ENCODE measurements at regions of chr12 and their contacts with region 1.

Region 1: GRCh38 chr12:64059685-64060084 is 162.4 kb downstream of the KICS2 start:
- DNase-seq: peak in 1 of 10 donors; percentile 25
- H3K4me3 ChIP-seq: peak overlapping the region in 28 of 59 donors; percentile 0 to 40 (median 19)
- H3K27ac ChIP-seq: peak overlapping the region in 54 of 59 donors; percentile 9 to 86 (median 75)
- H3K27me3 ChIP-seq: no peaks in the 10 kb centered on the region
- CTCF ChIP-seq: peak in 39 of 56 donors; percentile 9 to 64 (median 33)

Region 2: GRCh38 chr12:63940310-63941005 is 119.2 kb before region 1 on chr12:
- intact Hi-C with region 1: loop called in 1 of 2 experiments (anchors 5 kb)
- DNase-seq: peak in 1 of 10 donors; percentile 45
- H3K4me3 ChIP-seq: peak overlapping the region in 38 of 59 donors; percentile 1 to 42 (median 22)
- H3K27ac ChIP-seq: peak overlapping the region; percentile 46 to 93 (median 83)
- H3K27me3 ChIP-seq: no peaks in the 10 kb centered on the region
- CTCF ChIP-seq: peak in 3 of 56 donors; percentile 1 to 29 (median 5)

Region 3: DNA sequence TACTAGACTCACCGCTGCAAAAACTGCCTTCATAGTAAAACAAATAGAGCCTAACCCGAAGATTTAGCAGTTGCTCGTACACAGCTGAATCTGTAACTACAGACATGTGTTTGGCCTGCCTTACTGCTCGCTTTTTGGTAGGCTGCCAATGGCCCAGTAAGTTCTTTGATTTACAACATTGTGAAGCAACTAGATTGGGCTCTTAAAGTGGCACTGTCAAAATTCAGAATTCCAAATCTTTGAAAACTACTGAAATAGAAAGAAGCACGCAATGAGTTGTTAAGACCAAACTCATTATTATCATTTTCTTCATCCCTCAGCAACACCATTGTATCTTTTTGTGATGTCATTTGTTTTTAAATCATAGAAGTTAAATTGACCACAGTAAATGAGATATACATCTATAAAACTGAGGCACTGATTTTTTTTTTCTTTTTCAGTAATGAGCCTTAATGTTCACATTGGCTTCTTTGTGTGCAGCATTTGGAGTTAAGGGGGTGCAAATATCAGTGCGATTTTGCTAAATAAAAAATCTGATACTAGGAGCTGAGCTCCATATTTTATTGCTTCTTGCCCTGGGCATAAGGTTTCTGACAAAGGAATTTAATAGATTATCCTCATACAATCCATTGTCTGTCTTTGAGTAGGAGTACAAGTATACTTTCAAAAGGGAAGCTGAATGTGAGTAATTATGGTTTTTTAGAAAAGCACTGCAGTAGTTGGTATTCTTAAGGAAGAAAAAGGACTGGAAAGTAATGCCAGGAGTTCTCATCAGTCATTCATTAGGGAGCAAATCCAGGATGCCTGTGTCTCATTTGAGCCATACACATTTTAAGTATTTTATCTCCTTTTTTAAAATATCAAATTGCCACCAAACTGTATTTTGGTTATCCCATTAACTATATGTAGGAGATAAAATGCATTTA is 23.9 kb after region 1 on chr12:
- intact Hi-C with region 1: loop called in 1 of 2 experiments (anchors 2 kb)
- DNase-seq: peak in 9 of 10 donors; percentile 50 to 86 (median 67)
- H3K4me3 ChIP-seq: peak overlapping the region in 34 of 59 donors; percentile 4 to 44 (median 17)
- H3K27ac ChIP-seq: peak overlapping the region in 57 of 59 donors; percentile 4 to 84 (median 68)
- H3K27me3 ChIP-seq: no peaks in the 10 kb centered on the region
- CTCF ChIP-seq: peak in 3 of 56 donors; percentile 8 to 28 (median 15)

Measured in dorsolateral prefrontal cortex (tissue), 120 donors.